GM12878 (cell line): ENCODE measurements at regions of chr3 and their contacts with region 1.

Region 1: GRCh38 chr3:154334973-154335420 is 10.7 kb upstream of the DHX36 start:
- DNase-seq: no peak
- ATAC-seq: peak; percentile 61; the same call in 2 of the 3 replicates
- H3K4me3 ChIP-seq: no peak overlapping the region
- H3K27ac ChIP-seq: no peak overlapping the region
- H3K4me1 ChIP-seq: no peaks in the 10 kb centered on the region
- H3K27me3 ChIP-seq: no peaks in the 10 kb centered on the region; a peak in 1 of 4 replicates
- CTCF ChIP-seq: peak; percentile 33 to 47 (median 47); a peak in 2 of 6 replicates
- EP300 ChIP-seq: no peak
- POLR2A ChIP-seq: no peak
- RAD21 ChIP-seq: peak; percentile 53

Region 2: DNA sequence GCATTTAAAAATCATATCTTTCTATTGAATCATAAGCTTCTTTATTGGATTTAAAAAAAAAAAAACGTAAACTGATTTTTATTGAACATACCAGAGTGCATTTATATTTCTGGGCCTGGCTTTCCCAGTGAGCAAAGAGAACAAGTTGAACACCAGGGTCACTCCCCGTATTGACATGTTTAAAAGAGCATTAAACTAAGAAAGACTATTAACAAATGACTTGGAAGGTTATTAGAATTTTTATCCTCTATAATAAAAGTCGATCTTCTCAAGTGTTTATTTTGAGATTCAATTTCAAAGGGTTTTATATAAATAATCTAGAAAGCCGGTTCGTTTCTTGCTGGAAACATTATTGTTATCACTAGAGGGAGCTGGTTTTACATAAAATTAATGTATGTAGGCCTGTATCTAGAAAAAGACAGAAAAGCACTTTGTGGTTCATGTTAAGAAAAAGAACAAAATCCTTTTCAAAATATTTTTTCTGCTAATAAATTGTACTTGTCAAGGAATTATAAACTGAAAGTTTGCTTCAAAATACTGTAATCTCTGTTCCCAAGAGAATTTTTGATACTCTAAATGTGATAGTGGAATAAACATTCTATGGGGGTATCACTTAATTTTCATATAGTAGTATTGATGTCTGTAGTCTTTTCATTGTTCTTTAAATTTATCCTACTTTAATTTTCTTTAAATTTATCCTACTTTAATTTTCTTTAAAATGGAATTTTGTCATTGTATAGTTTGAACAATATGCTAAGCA is 423.3 kb after region 1 on chr3:
- CTCF ChIA-PET with region 1: no interaction called
- POLR2A ChIA-PET with region 1: no interaction called
- RAD21 ChIA-PET with region 1: no interaction called
- SMC1A ChIA-PET with region 1: no interaction called
- in situ Hi-C with region 1: no loop called
- intact Hi-C with region 1: loop called (anchors 10 kb)
- DNase-seq: no peak
- ATAC-seq: no peak
- H3K4me3 ChIP-seq: no peak overlapping the region
- H3K27ac ChIP-seq: no peak overlapping the region
- H3K4me1 ChIP-seq: no peaks in the 10 kb centered on the region
- H3K27me3 ChIP-seq: no peaks in the 10 kb centered on the region
- CTCF ChIP-seq: no peak; a peak in 1 of 6 replicates
- EP300 ChIP-seq: no peak
- POLR2A ChIP-seq: no peak
- RAD21 ChIP-seq: 0 out of 2 replicates have a peak, but pooled peaks have one; percentile 26